ENCODE measurements at regions of chr11 and their contacts with region 1.

Region 1: DNA sequence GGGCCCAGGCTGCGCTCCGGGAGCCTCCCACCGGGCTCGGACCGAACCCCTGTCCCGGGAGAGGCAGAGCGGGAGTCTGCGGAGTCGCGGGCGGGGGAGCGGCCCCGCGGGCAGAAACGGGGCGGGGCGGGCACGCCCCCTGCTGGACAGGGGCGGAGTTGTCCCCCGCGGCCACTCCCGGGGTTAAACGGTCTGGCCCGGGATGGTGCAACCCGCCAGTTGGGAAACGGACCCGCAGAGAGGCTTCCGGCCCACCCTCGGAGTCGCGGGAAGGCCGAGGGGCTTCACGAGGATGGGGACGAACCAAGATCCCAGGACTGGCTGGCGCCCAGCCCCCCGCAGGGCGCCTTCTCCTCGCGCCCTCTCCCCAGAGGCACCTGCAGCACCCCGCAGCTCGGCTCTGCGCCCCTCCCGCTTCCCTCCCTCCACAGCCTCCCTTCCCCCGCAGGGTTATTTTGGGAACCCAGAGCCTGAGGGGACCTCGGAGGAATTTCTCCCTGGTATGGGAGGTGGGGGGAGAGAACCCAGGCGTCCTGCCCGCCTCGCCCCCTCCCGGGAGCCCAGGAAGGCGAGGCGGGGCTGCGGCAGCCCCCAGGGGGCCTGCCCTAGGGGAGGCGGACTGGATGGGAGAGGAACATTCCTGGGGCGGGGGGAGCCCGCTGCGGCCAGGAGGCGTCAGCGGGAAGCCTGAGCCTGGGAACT is 902 bp downstream of the RASGRP2 start:
- DNase-seq: peak; percentile 70
- H3K4me3 ChIP-seq: peak overlapping the region; percentile 89
- H3K27ac ChIP-seq: peak overlapping the region; percentile 95
- H3K4me1 ChIP-seq: peaks cover 40% of the 10 kb centered on the region
- CTCF ChIP-seq: peak; percentile 79

Region 2: GRCh38 chr11:64688534-64688982 is 54.5 kb before region 1 on chr11:
- CTCF ChIA-PET with region 1: interaction called, 4 read pairs
- POLR2A ChIA-PET with region 1: no interaction called
- intact Hi-C with region 1: loop called (anchors 5 kb)
- DNase-seq: peak; percentile 95
- H3K4me3 ChIP-seq: peak overlapping the region; percentile 67
- H3K27ac ChIP-seq: peak overlapping the region; percentile 26
- H3K4me1 ChIP-seq: peaks cover 23% of the 10 kb centered on the region
- CTCF ChIP-seq: peak; percentile 98

Region 3: GRCh38 chr11:64723117-64723906 is 19.7 kb before region 1 on chr11 and contains the start of gene NRXN2:
- CTCF ChIA-PET with region 1: no interaction called
- POLR2A ChIA-PET with region 1: no interaction called
- intact Hi-C with region 1: no loop called
- DNase-seq: peak; percentile 92
- H3K4me3 ChIP-seq: peak within 1 kb of the TSS; percentile 74
- H3K27ac ChIP-seq: peak within 1 kb of the TSS; percentile 43
- H3K4me1 ChIP-seq: peaks cover 18% of the 10 kb centered on the region
- CTCF ChIP-seq: peak; percentile 98
- total RNA-seq, gene NRXN2: 2.2 and 2.4 TPM in 2 replicates

Region 4: DNA sequence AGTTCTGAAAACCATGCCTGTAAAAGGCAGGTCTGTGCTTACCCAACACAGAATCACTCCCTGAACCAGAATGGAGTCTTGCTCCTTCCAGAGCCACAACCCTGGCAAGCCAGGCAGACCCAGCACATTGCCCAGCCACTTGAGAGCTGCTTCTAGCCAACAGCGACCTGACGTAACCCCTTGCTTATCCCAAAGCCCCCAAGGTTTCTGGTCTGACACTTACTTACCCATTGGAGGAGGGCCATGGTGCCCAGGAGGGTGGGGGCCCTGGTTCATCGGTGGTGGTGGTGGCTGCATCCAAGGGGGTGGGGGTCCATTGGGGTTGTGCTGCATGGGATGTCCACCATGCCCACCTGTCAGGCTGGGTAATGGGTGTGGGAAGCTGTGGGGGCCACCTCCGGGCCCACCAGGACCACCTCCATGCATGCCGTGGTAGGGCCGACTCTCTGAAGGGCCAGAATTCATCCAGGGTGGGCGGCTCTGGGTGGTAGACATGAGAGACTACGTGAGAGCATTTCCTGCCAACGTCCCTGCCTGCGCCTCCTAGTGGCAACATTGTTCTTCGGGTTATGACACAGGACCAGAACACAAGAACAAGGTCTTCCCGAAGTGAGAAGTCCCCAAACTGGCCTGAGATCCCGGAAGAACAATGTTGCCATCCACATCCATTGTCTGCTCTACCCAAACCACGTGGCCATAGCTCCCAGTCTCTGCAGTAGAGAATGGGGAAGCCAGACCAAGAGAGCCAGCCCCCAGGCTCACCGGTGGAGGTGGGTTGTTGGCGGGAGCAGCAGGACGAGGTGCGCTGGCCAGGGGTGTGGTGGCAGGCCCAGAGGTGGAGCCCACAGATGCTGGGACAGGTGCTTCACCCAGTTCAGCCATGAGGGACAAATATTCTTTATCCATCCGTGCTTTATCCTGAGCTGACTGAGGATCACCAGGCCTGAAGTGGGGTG is 24.6 kb after region 1 on chr11:
- CTCF ChIA-PET with region 1: interaction called, 6 read pairs
- POLR2A ChIA-PET with region 1: interaction called, 9 read pairs
- intact Hi-C with region 1: loop called (anchors 1 kb)
- DNase-seq: peak; percentile 78
- H3K4me3 ChIP-seq: no peak overlapping the region
- H3K27ac ChIP-seq: no peak overlapping the region
- H3K4me1 ChIP-seq: peaks cover 50% of the 10 kb centered on the region
- CTCF ChIP-seq: peak; percentile 90

Region 5: GRCh38 chr11:64778508-64779346 is 35.7 kb after region 1 on chr11 and contains the start of gene SF1:
- CTCF ChIA-PET with region 1: no interaction called
- POLR2A ChIA-PET with region 1: interaction called, 5 read pairs
- intact Hi-C with region 1: loop called (anchors 1 kb)
- DNase-seq: peak; percentile 100
- H3K4me3 ChIP-seq: peak within 1 kb of the TSS; percentile 99
- H3K27ac ChIP-seq: peak within 1 kb of the TSS; percentile 91
- H3K4me1 ChIP-seq: peaks cover 67% of the 10 kb centered on the region
- CTCF ChIP-seq: 0 out of 2 replicates have a peak, but pooled peaks have one; percentile 13
- total RNA-seq, gene SF1: 247 and 261 TPM in 2 replicates

Region 6: GRCh38 chr11:64803163-64803845 is 60.3 kb after region 1 on chr11 and contains the start of gene MAP4K2:
- CTCF ChIA-PET with region 1: interaction called, 3 read pairs
- POLR2A ChIA-PET with region 1: no interaction called
- intact Hi-C with region 1: loop called (anchors 2 kb)
- DNase-seq: peak; percentile 91
- H3K4me3 ChIP-seq: peak within 1 kb of the TSS; percentile 78
- H3K27ac ChIP-seq: peak within 1 kb of the TSS; percentile 82
- H3K4me1 ChIP-seq: peaks cover 50% of the 10 kb centered on the region
- CTCF ChIP-seq: peak; percentile 61; the same call in 1 of the 2 replicates
- total RNA-seq, gene MAP4K2: 109 and 115 TPM in 2 replicates

Region 7: GRCh38 chr11:64878494-64879243 is 135.6 kb after region 1 on chr11 and contains the start of gene EHD1:
- CTCF ChIA-PET with region 1: no interaction called
- POLR2A ChIA-PET with region 1: no interaction called
- intact Hi-C with region 1: loop called (anchors 5 kb)
- DNase-seq: peak; percentile 100
- H3K4me3 ChIP-seq: peak within 1 kb of the TSS; percentile 89
- H3K27ac ChIP-seq: peak within 1 kb of the TSS; percentile 97
- H3K4me1 ChIP-seq: peaks cover 76% of the 10 kb centered on the region
- CTCF ChIP-seq: peak; percentile 72
- total RNA-seq, gene EHD1: 101 and 107 TPM in 2 replicates

Measured in OCI-LY7 (cell line).